ENCODE measurements at regions of chr17 and their contacts with region 1.

Region 1: GRCh38 chr17:2862197-2862596 is 66.0 kb downstream of the RAP1GAP2 start:
- DNase-seq: no peak
- H3K4me3 ChIP-seq: no peak overlapping the region
- H3K27me3 ChIP-seq: no peaks in the 10 kb centered on the region
- CTCF ChIP-seq: no peak

Region 2: DNA sequence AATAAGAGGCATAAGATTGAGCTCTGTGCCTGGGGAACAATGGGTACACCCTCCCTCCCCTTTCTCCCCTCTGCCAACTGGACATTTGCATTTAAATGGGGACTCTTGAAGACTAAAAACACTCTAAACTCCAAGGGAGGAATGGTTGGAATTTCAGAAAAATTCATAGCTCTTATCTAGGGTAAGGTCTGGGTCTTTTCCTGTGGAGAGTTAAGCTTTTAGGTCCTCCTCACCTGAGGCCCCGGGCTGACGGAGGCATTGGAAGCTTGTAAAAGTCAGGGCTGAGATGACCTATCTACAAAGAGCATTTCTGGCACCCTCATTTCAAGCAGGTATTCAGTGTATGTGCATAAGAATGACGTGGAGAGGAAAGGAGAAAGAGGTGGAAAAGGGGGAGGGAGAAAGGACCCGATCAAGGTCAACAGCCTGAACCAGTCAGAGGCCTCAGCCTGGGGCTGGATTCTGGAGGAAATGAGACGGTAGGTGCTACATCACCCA is 12.0 kb after region 1 on chr17:
- CTCF ChIA-PET with region 1: no interaction called
- POLR2A ChIA-PET with region 1: interaction called, 16 read pairs
- DNase-seq: no peak
- H3K4me3 ChIP-seq: no peak overlapping the region
- H3K27me3 ChIP-seq: no peaks in the 10 kb centered on the region
- CTCF ChIP-seq: no peak